ENCODE measurements at regions of chr4 and their contacts with region 1.

Region 1: GRCh38 chr4:152436384-152436783 is 99.5 kb downstream of the FBXW7 start:
- DNase-seq: no peak
- H3K4me3 ChIP-seq: no peak overlapping the region
- H3K27ac ChIP-seq: no peak overlapping the region
- H3K4me1 ChIP-seq: peaks cover 0 to 5% (median under 1%) of the 10 kb centered on the region in 4 experiments; a peak in 2 of 7 replicates
- H3K27me3 ChIP-seq: no peaks in the 10 kb centered on the region
- CTCF ChIP-seq: peak in 2 of 3 experiments; percentile 33 to 58; a peak in 3 of 4 replicates
- EP300 ChIP-seq: no peak
- POLR2A ChIP-seq: no peak
- RAD21 ChIP-seq: peak; percentile 11 to 29; a peak in 2 of 4 replicates

Region 2: GRCh38 chr4:152399246-152399645 is 37.1 kb before region 1 on chr4:
- CTCF ChIA-PET with region 1: no interaction called
- POLR2A ChIA-PET with region 1: no interaction called
- DNase-seq: no peak
- H3K4me3 ChIP-seq: no peak overlapping the region
- H3K27ac ChIP-seq: no peak overlapping the region
- H3K4me1 ChIP-seq: no peaks in the 10 kb centered on the region
- H3K27me3 ChIP-seq: no peaks in the 10 kb centered on the region
- CTCF ChIP-seq: no peak
- EP300 ChIP-seq: no peak
- POLR2A ChIP-seq: no peak
- RAD21 ChIP-seq: no peak

Region 3: DNA sequence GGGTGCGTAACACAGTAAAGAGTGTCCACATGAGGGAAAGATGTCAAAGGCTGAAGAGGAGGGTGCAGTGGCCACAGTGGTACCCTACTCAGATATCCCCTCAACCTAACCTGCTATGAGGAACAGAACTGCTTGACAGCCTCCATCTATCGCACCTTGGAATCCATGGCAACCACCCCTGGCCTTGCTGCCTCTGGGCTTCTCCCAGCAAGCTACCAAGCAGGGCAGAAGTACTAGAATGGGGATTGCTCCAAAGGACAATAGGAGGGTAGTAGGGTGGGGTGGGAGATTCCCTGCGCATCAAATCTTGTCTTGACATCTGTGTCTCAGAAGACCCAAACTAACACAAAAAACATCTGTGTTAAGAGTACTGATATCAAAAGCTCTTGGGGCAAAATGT is 18.7 kb before region 1 on chr4:
- CTCF ChIA-PET with region 1: interaction called, 10 read pairs
- POLR2A ChIA-PET with region 1: interaction called, 4 read pairs
- DNase-seq: no peak
- H3K4me3 ChIP-seq: no peak overlapping the region
- H3K27ac ChIP-seq: no peak overlapping the region
- H3K4me1 ChIP-seq: peaks cover 0 to 2% (median 0%) of the 10 kb centered on the region in 4 experiments; a peak in 1 of 7 replicates
- H3K27me3 ChIP-seq: no peaks in the 10 kb centered on the region
- CTCF ChIP-seq: no peak
- EP300 ChIP-seq: no peak
- POLR2A ChIP-seq: no peak
- RAD21 ChIP-seq: no peak

Region 4: GRCh38 chr4:152696764-152697261 is 260.4 kb after region 1 on chr4:
- CTCF ChIA-PET with region 1: no interaction called
- POLR2A ChIA-PET with region 1: no interaction called
- DNase-seq: no peak
- H3K4me3 ChIP-seq: no peak overlapping the region
- H3K27ac ChIP-seq: no peak overlapping the region
- H3K4me1 ChIP-seq: peaks cover 7 to 11% (median 10%) of the 10 kb centered on the region in 4 experiments; a peak in 6 of 7 replicates
- H3K27me3 ChIP-seq: no peaks in the 10 kb centered on the region
- CTCF ChIP-seq: no peak
- EP300 ChIP-seq: no peak
- POLR2A ChIP-seq: no peak
- RAD21 ChIP-seq: no peak

Measured in H1 (cell line).